ENCODE measurements at regions of chr3 and their contacts with region 1.

Region 1: GRCh38 chr3:12135029-12135657 is 23.6 kb downstream of the TIMP4 start:
- DNase-seq: peak; percentile 83
- ATAC-seq: peak; percentile 90
- H3K4me3 ChIP-seq: no peak overlapping the region
- H3K27ac ChIP-seq: no peak overlapping the region
- H3K4me1 ChIP-seq: peaks cover 15% of the 10 kb centered on the region
- H3K27me3 ChIP-seq: no peaks in the 10 kb centered on the region
- CTCF ChIP-seq: peak; percentile 99

Region 2: DNA sequence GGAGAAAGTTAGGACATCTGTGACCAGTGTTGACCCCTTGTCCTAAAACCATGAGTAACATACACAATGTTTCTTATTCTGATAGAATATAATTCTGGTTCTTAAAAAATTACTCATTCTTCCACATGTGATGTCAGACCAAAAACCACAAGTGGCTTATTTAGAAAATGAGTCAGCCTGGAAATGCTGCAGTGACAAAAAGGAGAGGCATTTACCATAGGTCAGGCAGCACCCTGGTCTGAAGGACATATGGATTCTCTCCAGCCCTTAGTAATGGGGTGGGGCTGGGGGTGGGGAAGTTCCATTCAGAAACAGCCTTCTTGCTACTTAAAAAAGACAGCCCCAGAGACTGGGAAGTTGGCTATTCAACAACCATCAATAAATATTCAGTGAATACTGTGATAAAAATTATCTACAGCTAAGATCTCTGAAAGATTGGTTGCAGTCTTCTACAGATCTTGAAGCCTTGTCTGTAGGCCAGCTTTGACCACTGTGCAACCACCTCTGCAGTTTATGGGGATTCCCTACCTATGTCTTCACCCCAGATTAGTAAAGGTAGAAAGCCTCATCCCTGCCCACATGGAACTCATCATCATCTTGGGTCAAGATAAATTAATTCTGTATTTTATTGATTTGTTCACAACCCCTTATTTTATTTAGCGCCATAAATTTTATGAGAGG is 58.5 kb after region 1 on chr3:
- CTCF ChIA-PET with region 1: interaction called, 6 read pairs
- POLR2A ChIA-PET with region 1: no interaction called
- intact Hi-C with region 1: loop called (anchors 1 kb)
- DNase-seq: peak; percentile 99
- ATAC-seq: peak; percentile 82
- H3K4me3 ChIP-seq: peak overlapping the region; percentile 47
- H3K27ac ChIP-seq: peak overlapping the region; percentile 97
- H3K4me1 ChIP-seq: peaks cover 57% of the 10 kb centered on the region
- H3K27me3 ChIP-seq: no peaks in the 10 kb centered on the region
- CTCF ChIP-seq: no peak

Region 3: DNA sequence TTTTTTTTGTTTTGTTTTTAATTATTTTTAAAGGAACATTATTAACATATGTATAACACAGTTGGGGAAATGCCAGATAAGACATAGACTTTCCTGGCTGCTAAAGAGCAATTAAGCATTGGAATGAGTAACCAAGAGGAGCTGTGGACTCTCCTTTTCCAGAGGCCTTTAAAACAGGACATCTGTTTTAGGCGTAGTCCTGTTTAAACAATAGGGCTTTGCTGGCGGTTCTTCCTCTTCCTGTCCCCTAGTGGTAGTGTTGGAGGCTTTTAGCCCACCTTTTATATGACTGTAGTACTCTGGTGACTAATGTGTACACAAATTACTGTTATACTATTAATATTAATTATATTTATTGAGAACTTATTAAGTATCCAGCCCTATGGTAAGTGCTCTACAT is 235.6 kb after region 1 on chr3:
- CTCF ChIA-PET with region 1: no interaction called
- POLR2A ChIA-PET with region 1: no interaction called
- intact Hi-C with region 1: loop called (anchors 10 kb)
- DNase-seq: peak; percentile 88
- ATAC-seq: peak; percentile 78
- H3K4me3 ChIP-seq: no peak overlapping the region
- H3K27ac ChIP-seq: peak overlapping the region; percentile 91
- H3K4me1 ChIP-seq: peaks cover 65% of the 10 kb centered on the region
- H3K27me3 ChIP-seq: no peaks in the 10 kb centered on the region
- CTCF ChIP-seq: peak; percentile 42; the same call in 1 of the 2 replicates

Region 4: GRCh38 chr3:12541631-12542030 is 406.5 kb after region 1 on chr3:
- CTCF ChIA-PET with region 1: no interaction called
- POLR2A ChIA-PET with region 1: no interaction called
- intact Hi-C with region 1: loop called (anchors 5 kb)
- DNase-seq: no peak
- ATAC-seq: no peak
- H3K4me3 ChIP-seq: no peak overlapping the region
- H3K27ac ChIP-seq: no peak overlapping the region
- H3K4me1 ChIP-seq: peaks cover 21% of the 10 kb centered on the region
- H3K27me3 ChIP-seq: no peaks in the 10 kb centered on the region
- CTCF ChIP-seq: no peak

Region 5: DNA sequence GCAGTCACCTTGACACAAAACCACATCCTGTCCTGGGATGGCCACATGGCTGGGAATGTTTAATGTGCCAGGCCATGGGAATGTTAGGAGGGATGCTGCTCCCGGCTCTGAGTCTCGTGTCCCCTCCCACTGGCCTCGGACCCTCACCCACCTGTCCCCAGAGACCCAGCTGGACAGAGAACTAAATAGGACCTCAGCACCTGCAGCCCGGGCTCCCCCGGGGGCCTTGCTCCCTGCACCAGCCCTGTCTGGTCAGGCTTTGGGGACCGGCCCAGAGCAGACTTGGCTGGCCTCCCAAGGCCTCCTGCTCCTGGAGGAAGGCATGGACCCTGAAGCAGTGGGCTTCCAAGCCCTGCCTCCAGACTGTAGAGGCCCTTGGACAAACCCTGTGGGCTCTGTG is 1038.0 kb after region 1 on chr3:
- CTCF ChIA-PET with region 1: no interaction called
- POLR2A ChIA-PET with region 1: no interaction called
- intact Hi-C with region 1: no loop called
- DNase-seq: no peak
- ATAC-seq: no peak; the same call in 1 of the 2 replicates
- H3K4me3 ChIP-seq: no peak overlapping the region
- H3K27ac ChIP-seq: no peak overlapping the region
- H3K4me1 ChIP-seq: no peaks in the 10 kb centered on the region
- H3K27me3 ChIP-seq: no peaks in the 10 kb centered on the region
- CTCF ChIP-seq: no peak

Measured in PC-3 (cell line).